BJ (cell line): ENCODE measurements at regions of chr1 and their contacts with region 1.

Region 1: GRCh38 chr1:26529655-26530409 is at the start of gene RPS6KA1:
- DNase-seq: no peak
- H3K4me3 ChIP-seq: peak within 1 kb of the TSS; percentile 47
- H3K27me3 ChIP-seq: no peaks in the 10 kb centered on the region
- CTCF ChIP-seq: no peak
- polyA plus RNA-seq, gene RPS6KA1: 2.5 and 3.2 TPM in 2 replicates

Region 2: GRCh38 chr1:26516987-26517765 is 12.7 kb before region 1 on chr1:
- CTCF ChIA-PET with region 1: interaction called, 6 read pairs
- POLR2A ChIA-PET with region 1: interaction called, 12 read pairs
- DNase-seq: no peak
- H3K4me3 ChIP-seq: no peak overlapping the region
- H3K27me3 ChIP-seq: peaks cover 14% of the 10 kb centered on the region
- CTCF ChIP-seq: no peak